Left lung (tissue), 14 donors: ENCODE measurements at regions of chr12 and their contacts with region 1.

Region 1: GRCh38 chr12:45388545-45388944 is 172.7 kb downstream of the ANO6 start:
- DNase-seq: peak in 1 of 4 donors; percentile 52
- ATAC-seq: peak; percentile 68
- H3K4me3 ChIP-seq: no peak overlapping the region
- H3K27ac ChIP-seq: no peak overlapping the region
- H3K4me1 ChIP-seq: no peaks in the 10 kb centered on the region
- H3K27me3 ChIP-seq: no peaks in the 10 kb centered on the region
- CTCF ChIP-seq: peak; percentile 14 to 45

Region 2: DNA sequence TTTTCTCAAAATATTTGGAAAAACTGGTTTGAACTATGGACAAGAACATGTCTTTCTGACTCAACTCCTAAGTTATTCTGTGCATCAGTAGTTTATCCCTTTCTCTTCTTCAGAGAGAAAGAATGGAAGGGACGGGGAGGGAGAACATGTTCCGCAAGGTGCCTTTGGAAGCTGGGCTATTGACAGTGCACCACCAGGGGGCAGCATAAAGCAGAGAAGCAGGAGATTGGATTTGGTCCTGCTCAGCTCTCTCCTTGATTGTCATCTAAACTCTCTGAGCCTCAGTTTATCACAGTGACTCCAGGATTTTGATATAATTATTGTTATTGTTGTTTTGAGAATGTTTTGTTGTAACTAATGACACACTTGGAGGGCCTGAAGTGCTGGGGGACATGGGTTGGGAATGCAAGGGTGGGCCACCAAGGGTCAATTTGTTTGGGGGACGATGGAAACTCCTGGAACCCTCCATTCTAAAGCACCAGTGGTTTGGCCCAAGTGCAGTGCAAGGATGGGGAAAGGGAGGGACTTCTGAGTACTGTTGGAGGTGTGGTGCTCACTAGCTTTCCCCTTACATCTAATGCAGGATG is 218.0 kb before region 1 on chr12:
- intact Hi-C with region 1: loop called in 1 of 2 experiments (anchors 5 kb)
- DNase-seq: peak in 3 of 4 donors; percentile 32 to 79 (median 68)
- ATAC-seq: peak; percentile 95
- H3K4me3 ChIP-seq: no peak overlapping the region
- H3K27ac ChIP-seq: no peak overlapping the region
- H3K4me1 ChIP-seq: no peaks in the 10 kb centered on the region
- H3K27me3 ChIP-seq: no peaks in the 10 kb centered on the region
- CTCF ChIP-seq: peak; percentile 92 to 95

Region 3: GRCh38 chr12:45215419-45216229 is 172.9 kb before region 1 on chr12 and contains the start of gene ANO6:
- intact Hi-C with region 1: loop called in 1 of 2 experiments (anchors 10 kb)
- DNase-seq: peak; percentile 86 to 99 (median 90)
- ATAC-seq: peak; percentile 89
- H3K4me3 ChIP-seq: peak within 1 kb of the TSS; percentile 69 to 92
- H3K27ac ChIP-seq: peak within 1 kb of the TSS; percentile 96 to 98
- H3K4me1 ChIP-seq: peaks cover 5 to 46% of the 10 kb centered on the region in 2 donors
- H3K27me3 ChIP-seq: no peaks in the 10 kb centered on the region
- CTCF ChIP-seq: peak in 1 of 2 donors; percentile 11
- polyA plus RNA-seq, gene ANO6: 58.0 to 69.5 (median 64.9) TPM

Region 4: DNA sequence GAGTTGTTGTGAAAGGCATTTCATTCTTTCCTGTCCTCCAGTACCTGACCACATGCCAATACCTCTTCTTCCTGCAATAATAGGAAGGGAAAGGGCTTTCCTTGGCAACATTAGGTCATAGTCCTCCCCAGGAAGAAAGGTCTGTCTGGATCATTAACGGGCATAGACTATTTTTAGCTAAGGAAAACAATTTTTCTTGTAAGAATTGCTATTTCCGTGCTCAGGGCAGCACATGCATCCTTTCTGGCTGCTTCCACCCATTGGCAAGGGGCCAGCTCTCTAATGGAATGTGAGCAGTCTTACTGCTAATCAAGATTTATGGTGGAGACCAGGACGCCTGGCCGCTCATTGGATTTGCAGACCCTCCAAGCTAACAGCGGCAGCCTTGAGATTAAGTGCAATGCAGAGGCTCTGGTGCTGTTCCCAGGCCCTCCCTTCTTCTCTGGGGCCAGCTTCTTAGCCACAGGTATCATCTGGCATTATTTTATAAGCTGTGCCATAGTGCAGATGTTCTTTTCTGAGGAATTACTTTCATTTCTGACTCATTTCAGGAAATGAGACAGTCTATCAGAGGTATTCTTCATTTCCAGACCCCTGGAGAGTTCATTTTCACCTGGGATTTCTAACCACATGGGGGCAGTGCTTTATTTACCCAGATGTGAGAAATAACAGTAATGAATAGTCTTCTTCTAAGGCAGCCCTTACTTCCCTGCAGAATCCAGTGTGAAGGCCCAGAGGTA is 119.7 kb before region 1 on chr12:
- intact Hi-C with region 1: no loop called
- DNase-seq: peak in 3 of 4 donors; percentile 66 to 79 (median 68)
- ATAC-seq: peak; percentile 68
- H3K4me3 ChIP-seq: no peak overlapping the region
- H3K27ac ChIP-seq: peak overlapping the region; percentile 42 to 53
- H3K4me1 ChIP-seq: peaks cover 20 to 28% of the 10 kb centered on the region in 2 donors
- H3K27me3 ChIP-seq: no peaks in the 10 kb centered on the region
- CTCF ChIP-seq: peak; percentile 23 to 30

Region 5: GRCh38 chr12:45446008-45446407 is 57.5 kb after region 1 on chr12:
- intact Hi-C with region 1: no loop called
- DNase-seq: no peak
- ATAC-seq: no peak
- H3K4me3 ChIP-seq: no peak overlapping the region
- H3K27ac ChIP-seq: no peak overlapping the region
- H3K4me1 ChIP-seq: no peaks in the 10 kb centered on the region
- H3K27me3 ChIP-seq: no peaks in the 10 kb centered on the region
- CTCF ChIP-seq: no peak

Region 6: DNA sequence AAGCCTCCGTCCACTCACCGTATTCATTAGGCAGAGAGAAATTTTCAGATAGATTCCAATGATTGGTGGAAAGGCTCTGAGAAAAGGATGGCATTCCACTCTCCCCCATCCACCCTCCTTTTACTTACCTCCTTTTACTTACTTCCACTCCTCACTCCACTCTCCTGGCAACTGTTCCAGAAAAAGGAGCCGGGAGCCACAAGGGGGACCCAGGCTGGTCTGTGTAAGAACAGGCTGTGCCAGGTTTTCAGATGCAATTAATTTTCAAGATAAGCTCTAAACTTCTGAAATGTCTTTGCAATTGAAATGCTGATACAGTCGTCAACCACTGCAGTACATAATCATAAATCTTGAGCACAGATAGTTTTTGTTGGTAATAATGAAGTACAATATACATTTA is 76.2 kb after region 1 on chr12:
- intact Hi-C with region 1: no loop called
- DNase-seq: peak in 1 of 4 donors; percentile 10
- ATAC-seq: no peak
- H3K4me3 ChIP-seq: no peak overlapping the region
- H3K27ac ChIP-seq: no peak overlapping the region
- H3K4me1 ChIP-seq: no peaks in the 10 kb centered on the region
- H3K27me3 ChIP-seq: no peaks in the 10 kb centered on the region
- CTCF ChIP-seq: no peak

Region 7: GRCh38 chr12:45745861-45746277 is 357.3 kb after region 1 on chr12:
- intact Hi-C with region 1: no loop called
- DNase-seq: no peak
- ATAC-seq: peak; percentile 74
- H3K4me3 ChIP-seq: no peak overlapping the region
- H3K27ac ChIP-seq: no peak overlapping the region
- H3K4me1 ChIP-seq: peaks cover 0 to 15% of the 10 kb centered on the region in 2 donors
- H3K27me3 ChIP-seq: no peaks in the 10 kb centered on the region
- CTCF ChIP-seq: no peak